ENCODE measurements at regions of chr15 and their contacts with region 1.

Region 1: DNA sequence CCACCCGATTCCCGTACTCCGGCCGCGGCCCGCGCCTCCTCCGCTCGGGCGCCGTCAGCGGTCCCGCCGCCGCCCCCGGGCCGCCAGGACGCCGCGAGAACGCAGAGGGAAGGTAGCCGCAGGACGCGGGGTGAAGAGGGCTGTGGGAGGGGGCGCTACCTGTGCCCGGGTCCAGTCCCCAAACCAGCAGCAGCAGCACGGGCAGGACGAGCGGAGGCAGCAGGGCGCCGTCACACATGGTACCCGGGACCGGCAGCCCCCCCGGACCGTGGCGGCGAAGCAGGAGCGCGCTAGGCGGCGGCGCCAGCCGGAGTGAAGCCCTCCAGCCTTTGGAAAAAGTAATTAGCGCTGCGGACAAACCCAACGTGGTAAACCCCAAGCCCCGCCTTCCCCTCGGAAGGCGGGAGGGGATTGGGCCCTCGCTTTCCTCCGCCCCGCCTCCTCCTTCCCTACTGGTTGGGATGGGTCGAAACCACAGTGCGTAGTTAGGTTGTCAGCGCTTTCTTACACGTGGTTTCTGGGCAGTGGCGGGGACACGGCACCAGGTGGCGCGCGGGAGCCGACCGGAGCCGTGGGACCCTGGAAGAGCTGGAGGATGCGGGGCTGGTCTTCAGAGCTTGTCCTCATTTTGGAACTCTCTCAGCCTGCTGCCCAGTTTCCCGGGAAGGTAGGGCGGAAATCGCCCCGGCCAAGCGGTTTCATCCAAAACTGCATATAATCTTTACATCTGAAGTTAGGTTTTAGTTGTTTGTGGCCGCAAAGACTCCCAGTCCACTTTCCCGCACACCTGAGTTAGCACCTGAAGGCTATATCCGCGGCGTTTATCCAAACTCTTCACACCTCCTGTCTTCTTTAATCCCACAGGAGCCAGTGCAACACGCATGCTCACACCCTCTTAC is at the start of gene ADAMTS17:
- DNase-seq: peak; percentile 98
- H3K4me3 Mint-ChIP-seq: peak within 1 kb of the TSS; percentile 70
- H3K27ac Mint-ChIP-seq: no peak within 1 kb of the TSS
- H3K4me1 Mint-ChIP-seq: peaks cover 17% of the 10 kb centered on the region
- H3K27me3 Mint-ChIP-seq: peaks cover 46% of the 10 kb centered on the region
- total RNA-seq, gene ADAMTS17: 0.47 and 1.1 TPM in 2 replicates

Region 2: DNA sequence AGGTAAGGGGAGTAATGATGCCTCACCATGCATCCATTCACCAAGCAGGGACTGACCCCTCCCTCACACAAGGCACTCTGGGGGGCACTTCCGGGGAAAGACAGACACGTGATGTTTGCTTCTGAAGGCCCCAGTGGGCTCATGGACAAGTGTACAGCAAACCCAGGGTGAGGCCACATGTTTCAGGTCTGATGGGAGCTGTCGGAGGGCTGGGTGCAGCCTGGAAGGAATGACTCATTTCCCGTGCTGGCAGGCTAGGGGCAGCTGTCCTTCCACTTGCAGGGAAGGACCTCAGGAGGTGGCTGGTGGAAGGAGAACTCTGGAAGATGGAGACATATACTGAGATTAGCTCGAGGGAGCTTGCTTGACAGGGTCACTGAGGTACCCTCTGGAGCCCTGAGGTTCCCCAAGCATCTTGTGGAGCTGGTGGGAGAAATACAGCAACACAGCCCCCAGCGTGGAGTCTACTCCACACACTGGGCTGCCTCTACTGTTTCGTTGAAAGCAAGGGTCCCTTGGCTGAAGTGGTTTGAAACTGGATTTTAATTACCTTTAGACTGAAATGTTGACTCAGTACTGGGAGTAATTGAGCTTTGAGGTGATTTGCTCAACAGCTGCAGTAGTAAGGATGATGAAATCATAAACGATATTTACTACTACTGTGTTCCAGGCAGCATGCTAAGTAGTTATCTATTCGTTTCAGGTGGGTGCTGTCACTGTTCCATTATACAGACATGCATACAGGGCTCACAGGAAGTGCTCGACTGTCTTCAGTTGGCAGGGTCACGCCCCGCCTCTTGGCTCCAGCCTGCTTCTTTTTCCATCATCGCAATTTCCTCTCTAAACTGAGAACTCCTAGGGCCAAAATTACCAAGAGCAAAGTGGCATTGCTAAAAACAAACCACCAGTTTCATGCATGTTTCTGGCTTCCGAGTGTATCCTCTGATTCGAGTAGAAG is 230.5 kb before region 1 on chr15:
- intact Hi-C with region 1: loop called (anchors 5 kb)
- DNase-seq: peak; percentile 79
- H3K4me3 Mint-ChIP-seq: peak overlapping the region; percentile 47
- H3K27ac Mint-ChIP-seq: peak overlapping the region; percentile 91
- H3K4me1 Mint-ChIP-seq: peaks cover 30% of the 10 kb centered on the region
- H3K27me3 Mint-ChIP-seq: no peaks in the 10 kb centered on the region

Region 3: DNA sequence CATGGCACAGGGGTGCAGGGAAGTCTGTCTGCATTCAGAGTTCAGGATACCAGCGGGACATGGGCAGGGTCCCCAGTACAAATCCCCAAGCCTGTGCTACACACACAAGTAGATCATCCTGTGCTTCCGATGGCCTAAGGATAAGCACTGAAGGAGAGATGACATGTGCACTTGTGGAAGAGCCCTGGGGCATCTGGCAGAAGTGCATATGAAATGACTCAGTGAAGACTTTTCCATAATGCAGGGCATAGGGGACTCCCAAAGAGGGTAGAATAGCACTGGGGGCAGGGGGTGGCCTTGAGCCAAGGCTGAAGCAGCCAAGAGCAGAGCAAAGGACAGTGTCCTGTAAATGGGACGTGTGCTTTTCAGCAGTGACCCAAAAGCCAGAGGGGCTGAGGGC is 23.0 kb before region 1 on chr15:
- intact Hi-C with region 1: no loop called
- DNase-seq: no peak
- H3K4me3 Mint-ChIP-seq: no peak overlapping the region
- H3K27ac Mint-ChIP-seq: no peak overlapping the region
- H3K4me1 Mint-ChIP-seq: no peaks in the 10 kb centered on the region
- H3K27me3 Mint-ChIP-seq: no peaks in the 10 kb centered on the region

Region 4: DNA sequence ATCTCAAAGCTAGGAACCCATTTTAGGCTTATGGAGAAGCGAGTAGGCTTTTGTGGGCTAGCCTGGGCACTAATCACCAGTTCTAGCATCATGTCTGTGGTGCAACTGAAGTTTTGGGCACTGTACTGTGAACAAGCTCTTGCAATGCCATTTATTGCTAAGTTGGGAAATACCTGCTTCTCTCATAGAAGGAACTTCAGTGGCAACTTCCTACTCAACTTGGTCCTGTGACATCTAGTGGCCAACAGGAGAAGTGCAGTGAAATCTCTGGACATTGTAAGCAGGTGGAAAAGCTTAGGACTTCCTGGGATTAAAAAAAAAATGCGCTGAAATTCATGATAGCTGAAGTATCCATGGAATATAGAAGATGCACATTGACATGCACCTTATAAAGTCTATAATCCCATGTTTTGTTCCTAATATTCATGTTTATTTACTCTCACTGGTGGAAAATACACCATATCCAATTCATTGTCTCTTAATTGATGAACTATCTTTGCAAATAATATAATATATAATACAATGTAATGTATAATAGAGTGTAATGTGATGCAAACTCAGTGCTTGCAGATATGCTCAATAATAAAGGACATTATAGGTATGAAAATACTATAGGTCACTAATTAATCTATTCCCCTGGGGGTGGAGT is 531.2 kb after region 1 on chr15:
- intact Hi-C with region 1: loop called (anchors 5 kb)
- DNase-seq: peak; percentile 86
- H3K4me3 Mint-ChIP-seq: no peak overlapping the region
- H3K27ac Mint-ChIP-seq: no peak overlapping the region
- H3K4me1 Mint-ChIP-seq: no peaks in the 10 kb centered on the region
- H3K27me3 Mint-ChIP-seq: peaks cover 31% of the 10 kb centered on the region

Region 5: DNA sequence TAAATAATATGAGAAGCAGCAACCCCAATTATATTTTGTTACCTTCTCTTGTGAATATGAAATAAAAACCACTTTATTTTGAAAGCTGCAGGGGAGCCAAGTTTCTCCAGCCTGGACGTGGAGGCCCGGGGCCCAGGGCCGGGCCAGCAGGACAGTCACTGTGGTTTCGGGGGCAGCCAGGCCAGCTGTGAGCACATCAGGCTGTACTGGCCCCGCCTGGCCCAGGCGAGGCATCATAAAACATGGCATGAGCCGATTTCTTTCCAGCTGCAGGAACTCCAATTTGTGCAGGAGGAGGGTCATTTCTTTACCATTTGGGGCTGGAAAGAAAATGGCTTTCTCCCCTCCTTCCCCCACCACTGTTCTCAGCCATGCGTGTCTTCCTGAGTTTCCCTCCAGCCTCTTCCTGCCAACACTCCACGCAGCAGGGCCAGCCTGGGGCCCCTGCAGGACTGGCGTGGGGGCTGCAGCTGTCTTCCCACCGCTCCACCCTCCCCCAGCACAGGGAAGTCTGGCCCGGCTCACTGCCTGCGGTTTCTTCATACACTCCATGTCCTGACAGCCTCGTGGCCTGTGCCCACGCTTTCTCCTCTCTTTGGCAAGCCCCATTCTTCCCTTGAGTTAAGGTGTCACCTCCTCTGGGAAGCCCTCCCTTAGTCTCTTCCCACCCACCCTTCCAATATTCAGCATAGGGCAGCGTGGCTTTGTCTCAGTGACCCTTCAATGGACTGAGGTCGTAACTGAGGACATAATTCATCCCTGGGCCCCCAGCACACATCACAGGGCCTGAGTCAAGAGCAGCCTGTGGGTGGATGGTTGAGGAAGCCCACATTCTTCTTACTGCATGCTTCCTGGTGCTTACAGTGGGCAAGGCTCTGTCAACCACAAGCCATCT is 774.1 kb after region 1 on chr15:
- intact Hi-C with region 1: no loop called
- DNase-seq: no peak
- H3K4me3 Mint-ChIP-seq: no peak overlapping the region
- H3K27ac Mint-ChIP-seq: peak overlapping the region; percentile 74
- H3K4me1 Mint-ChIP-seq: peaks cover 13% of the 10 kb centered on the region
- H3K27me3 Mint-ChIP-seq: no peaks in the 10 kb centered on the region